Adrenal gland (tissue), 19 donors: ENCODE measurements at regions of chr13 and their contacts with region 1.

Region 1: GRCh38 chr13:23984546-23984945 is 87.2 kb upstream of the C1QTNF9B start:
- DNase-seq: no peak
- H3K4me3 ChIP-seq: no peak overlapping the region
- H3K27ac ChIP-seq: no peak overlapping the region
- H3K4me1 ChIP-seq: peaks cover 4 to 7% of the 10 kb centered on the region in 2 donors
- H3K27me3 ChIP-seq: no peaks in the 10 kb centered on the region
- CTCF ChIP-seq: no peak
- POLR2A ChIP-seq: no peak

Region 2: GRCh38 chr13:23969647-23970046 is 14.9 kb before region 1 on chr13:
- intact Hi-C with region 1: loop called in 1 of 2 experiments (anchors 2 kb)
- DNase-seq: no peak
- H3K4me3 ChIP-seq: no peak overlapping the region
- H3K27ac ChIP-seq: no peak overlapping the region
- H3K4me1 ChIP-seq: no peaks in the 10 kb centered on the region
- H3K27me3 ChIP-seq: no peaks in the 10 kb centered on the region
- CTCF ChIP-seq: no peak
- POLR2A ChIP-seq: no peak